CD14-positive monocyte (primary cell): ENCODE measurements at regions of chr12 and their contacts with region 1.

Region 1: DNA sequence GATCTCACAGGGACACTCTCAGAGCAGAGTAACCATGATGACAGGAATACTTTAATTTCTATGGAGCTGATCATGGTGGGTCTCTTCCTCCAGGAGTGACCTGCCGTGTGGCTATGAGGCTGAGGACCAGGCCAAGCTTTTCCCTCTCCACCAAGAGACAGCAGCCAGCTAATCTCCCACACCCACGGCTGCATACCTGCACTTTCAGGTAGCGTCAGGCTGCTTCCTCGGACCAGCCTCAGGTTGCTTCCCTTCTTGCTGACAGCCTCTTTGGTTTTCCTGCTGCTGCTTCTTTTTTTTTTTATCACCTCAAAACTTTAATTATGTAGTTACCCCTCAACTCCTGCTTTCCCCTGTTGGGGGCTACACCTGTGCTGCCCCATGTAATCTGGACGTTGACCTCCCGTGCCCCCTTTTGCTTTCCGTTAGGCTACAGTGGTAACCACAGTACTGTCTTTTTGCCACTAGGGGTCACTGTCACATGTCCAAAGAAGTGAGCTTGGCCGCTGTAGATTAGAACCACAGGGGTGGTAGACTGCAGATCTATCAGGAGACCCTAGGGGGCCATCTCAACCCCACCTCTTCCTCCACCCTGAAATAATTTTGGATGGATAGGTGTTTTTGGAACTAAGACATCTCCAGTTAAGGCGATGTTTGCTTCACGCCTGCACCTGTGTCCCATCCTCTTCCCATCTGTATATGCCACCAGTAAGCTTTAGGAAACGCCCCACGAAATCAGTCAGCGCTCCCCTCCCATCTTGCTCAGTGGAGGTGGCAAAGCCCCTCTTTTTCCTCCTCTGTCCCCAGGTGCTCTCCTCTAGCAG is 7.8 kb upstream of the PIP4K2C start:
- DNase-seq: peak; percentile 53 to 74 (median 73)
- H3K4me3 ChIP-seq: no peak overlapping the region
- H3K4me3 Mint-ChIP-seq: no peak overlapping the region
- H3K27ac ChIP-seq: no peak overlapping the region
- H3K27ac Mint-ChIP-seq: peak overlapping the region in 1 of 7 donors; percentile 64
- H3K4me1 ChIP-seq: peaks cover 15 to 17% of the 10 kb centered on the region in 2 donors
- H3K4me1 Mint-ChIP-seq: peaks cover 22% of the 10 kb centered on the region
- H3K27me3 ChIP-seq: peaks cover 5 to 20% of the 10 kb centered on the region in 2 donors
- H3K27me3 Mint-ChIP-seq: peaks cover 5 to 20% (median 9%) of the 10 kb centered on the region in 3 donors
- CTCF ChIP-seq: peak; percentile 97

Region 2: GRCh38 chr12:57621497-57622292 is 38.5 kb after region 1 on chr12:
- intact Hi-C with region 1: loop called (anchors 1 to 5 kb)
- DNase-seq: peak; percentile 24 to 50 (median 36)
- H3K4me3 ChIP-seq: peak overlapping the region in 2 of 3 experiments; percentile 23 to 74
- H3K4me3 Mint-ChIP-seq: peak overlapping the region; percentile 73 to 93
- H3K27ac ChIP-seq: no peak overlapping the region
- H3K27ac Mint-ChIP-seq: peak overlapping the region in 1 of 7 donors; percentile 82
- H3K4me1 ChIP-seq: peaks cover 18 to 23% of the 10 kb centered on the region in 2 donors
- H3K4me1 Mint-ChIP-seq: peaks cover 25% of the 10 kb centered on the region
- H3K27me3 ChIP-seq: peaks cover 54 to 97% of the 10 kb centered on the region in 2 donors
- H3K27me3 Mint-ChIP-seq: peaks cover 95 to 99% (median 97%) of the 10 kb centered on the region in 3 donors
- CTCF ChIP-seq: peak; percentile 97

Region 3: GRCh38 chr12:57693659-57694458 is 110.6 kb after region 1 on chr12 and contains the start of gene OS9:
- intact Hi-C with region 1: loop called in 1 of 2 experiments (anchors 10 kb)
- DNase-seq: peak; percentile 99 to 100 (median 100)
- H3K4me3 ChIP-seq: peak within 1 kb of the TSS; percentile 63 to 86 (median 78)
- H3K4me3 Mint-ChIP-seq: no peak within 1 kb of the TSS
- H3K27ac ChIP-seq: peak within 1 kb of the TSS; percentile 66 to 92
- H3K27ac Mint-ChIP-seq: no peak within 1 kb of the TSS
- H3K4me1 ChIP-seq: peaks cover 13 to 18% of the 10 kb centered on the region in 2 donors
- H3K4me1 Mint-ChIP-seq: peaks cover 2% of the 10 kb centered on the region
- H3K27me3 ChIP-seq: no peaks in the 10 kb centered on the region
- H3K27me3 Mint-ChIP-seq: peaks cover 2 to 18% (median 7%) of the 10 kb centered on the region in 3 donors
- CTCF ChIP-seq: peak; percentile 84
- polyA plus RNA-seq, gene OS9: 90.9 to 484 (median 128) TPM